Left cardiac atrium (tissue), 4 donors: ENCODE measurements at regions of chr15 and their contacts with region 1.

Region 1: DNA sequence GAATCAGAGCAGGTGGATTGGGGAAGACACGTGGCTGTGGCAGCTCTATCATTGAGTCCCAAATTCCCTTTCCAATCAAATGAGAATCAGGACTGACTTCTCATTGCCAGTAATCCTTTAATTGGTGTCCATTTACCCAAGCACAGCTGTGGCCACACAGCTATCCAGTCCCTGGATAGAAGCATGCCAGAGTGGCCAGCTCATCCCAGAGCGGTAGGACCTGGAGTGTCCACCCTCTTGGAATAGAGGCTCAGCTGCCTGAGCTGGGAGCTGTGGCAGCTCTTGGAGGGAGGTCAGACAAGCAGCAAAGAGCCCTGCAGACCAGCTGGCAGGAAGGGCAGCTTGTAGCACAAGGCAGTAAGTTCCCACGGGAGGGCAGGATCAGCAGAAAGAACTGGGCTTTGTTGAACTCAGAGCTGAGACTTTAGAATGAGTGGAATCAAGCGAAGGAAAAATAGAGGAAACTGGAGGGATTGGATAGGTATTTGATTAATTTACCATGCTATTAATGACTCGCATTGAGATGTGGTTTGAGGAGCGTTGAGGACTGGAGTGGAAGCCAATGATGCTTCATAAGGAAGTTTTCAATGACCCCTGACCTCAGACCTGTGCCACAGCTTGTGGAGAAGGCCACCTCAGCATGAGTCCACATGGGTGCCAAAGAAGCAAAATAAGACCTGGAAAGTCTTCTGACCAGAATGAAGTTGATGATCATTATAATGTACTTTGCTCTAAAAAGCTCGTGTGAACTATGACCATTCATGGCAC is 6.9 kb upstream of the ALPK3 start:
- DNase-seq: no peak
- ATAC-seq: peak; percentile 64 to 83

Region 2: GRCh38 chr15:84761607-84762131 is 48.6 kb before region 1 on chr15:
- intact Hi-C with region 1: loop called in 1 of 2 experiments (anchors 5 kb)
- DNase-seq: no peak
- ATAC-seq: peak in 1 of 2 donors; percentile 16

Region 3: DNA sequence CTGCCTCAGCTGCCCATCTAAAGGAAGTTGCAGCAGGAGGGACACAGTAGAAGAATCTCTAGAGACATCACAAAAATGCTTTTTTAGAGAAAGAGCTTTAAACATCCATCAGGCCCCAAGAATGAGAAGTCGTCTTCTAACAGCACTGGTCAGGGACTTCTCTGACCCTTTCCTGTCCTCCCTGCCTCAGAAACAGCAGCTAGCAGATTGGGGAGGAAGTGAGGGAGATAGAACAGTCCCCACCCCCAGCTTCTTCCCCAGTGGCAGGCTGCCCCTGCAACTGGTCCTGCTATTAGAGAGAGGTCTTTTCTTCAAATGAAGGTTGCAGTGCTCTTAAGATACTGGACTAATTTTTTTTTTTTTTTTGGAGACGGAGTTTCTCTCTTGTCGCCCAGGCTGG is 226.5 kb after region 1 on chr15:
- intact Hi-C with region 1: no loop called
- DNase-seq: no peak
- ATAC-seq: peak; percentile 55 to 68